PC-3 (cell line): ENCODE measurements at regions of chr3 and their contacts with region 1.

Region 1: DNA sequence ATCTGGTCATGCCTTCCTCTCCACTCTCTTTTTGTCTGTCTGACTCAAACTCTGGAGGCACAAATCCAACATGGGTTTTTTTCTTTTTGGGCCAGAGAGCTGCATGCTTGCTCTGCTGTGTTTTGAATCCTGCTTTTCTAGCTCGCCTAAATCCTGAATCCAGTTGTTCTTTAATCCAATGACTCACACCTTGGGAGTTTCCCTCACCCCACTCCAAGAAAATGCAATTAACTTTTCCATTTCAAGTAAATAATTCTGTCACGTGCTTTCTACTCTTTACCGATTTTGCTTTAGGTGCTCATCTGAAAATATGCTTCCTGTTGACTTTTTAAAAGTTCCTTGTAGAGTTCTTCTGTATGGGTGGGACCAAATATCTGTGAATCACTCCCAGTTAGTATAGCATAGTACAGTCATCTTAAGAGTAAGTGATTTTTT is 47.6 kb downstream of the SLMAP start:
- DNase-seq: peak; percentile 97
- ATAC-seq: peak; percentile 79
- H3K4me3 ChIP-seq: peak overlapping the region; percentile 36
- H3K27ac ChIP-seq: peak overlapping the region; percentile 90
- H3K4me1 ChIP-seq: peaks cover 51% of the 10 kb centered on the region
- H3K27me3 ChIP-seq: no peaks in the 10 kb centered on the region
- CTCF ChIP-seq: no peak

Region 2: GRCh38 chr3:57287205-57287604 is 516.5 kb before region 1 on chr3:
- CTCF ChIA-PET with region 1: no interaction called
- POLR2A ChIA-PET with region 1: interaction called, 26 read pairs
- intact Hi-C with region 1: no loop called
- DNase-seq: no peak
- ATAC-seq: peak; percentile 22; the same call in 1 of the 2 replicates
- H3K4me3 ChIP-seq: no peak overlapping the region
- H3K27ac ChIP-seq: no peak overlapping the region
- H3K4me1 ChIP-seq: no peaks in the 10 kb centered on the region
- H3K27me3 ChIP-seq: no peaks in the 10 kb centered on the region
- CTCF ChIP-seq: no peak

Region 3: GRCh38 chr3:57787867-57788623 is 15.6 kb before region 1 on chr3:
- CTCF ChIA-PET with region 1: no interaction called
- POLR2A ChIA-PET with region 1: no interaction called
- intact Hi-C with region 1: loop called (anchors 2 kb)
- DNase-seq: peak; percentile 56
- ATAC-seq: peak; percentile 37
- H3K4me3 ChIP-seq: no peak overlapping the region
- H3K27ac ChIP-seq: no peak overlapping the region
- H3K4me1 ChIP-seq: peaks cover 26% of the 10 kb centered on the region
- H3K27me3 ChIP-seq: no peaks in the 10 kb centered on the region
- CTCF ChIP-seq: no peak

Region 4: DNA sequence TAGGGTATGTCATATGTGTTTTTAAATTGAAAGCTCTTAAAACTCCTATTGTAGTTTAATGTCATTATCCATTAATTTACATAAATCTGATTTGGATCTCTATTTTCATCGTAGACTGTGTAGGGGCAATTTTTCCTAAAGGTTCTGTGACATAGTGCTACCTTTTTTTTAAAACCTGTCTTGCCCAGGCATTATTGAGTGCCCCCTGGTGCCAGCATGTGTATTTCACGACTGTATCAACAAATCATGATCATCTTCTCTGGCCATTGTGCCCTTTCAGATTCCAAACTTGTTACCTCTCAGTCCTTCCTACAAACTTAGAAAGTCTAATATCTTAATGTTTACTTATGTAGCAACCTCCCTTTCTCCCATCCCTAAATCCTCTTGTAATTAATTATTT is 107.3 kb after region 1 on chr3:
- CTCF ChIA-PET with region 1: no interaction called
- POLR2A ChIA-PET with region 1: no interaction called
- intact Hi-C with region 1: no loop called
- DNase-seq: peak; percentile 53
- ATAC-seq: peak; percentile 82
- H3K4me3 ChIP-seq: no peak overlapping the region
- H3K27ac ChIP-seq: no peak overlapping the region
- H3K4me1 ChIP-seq: peaks cover 13% of the 10 kb centered on the region
- H3K27me3 ChIP-seq: no peaks in the 10 kb centered on the region
- CTCF ChIP-seq: peak; percentile 83

Region 5: DNA sequence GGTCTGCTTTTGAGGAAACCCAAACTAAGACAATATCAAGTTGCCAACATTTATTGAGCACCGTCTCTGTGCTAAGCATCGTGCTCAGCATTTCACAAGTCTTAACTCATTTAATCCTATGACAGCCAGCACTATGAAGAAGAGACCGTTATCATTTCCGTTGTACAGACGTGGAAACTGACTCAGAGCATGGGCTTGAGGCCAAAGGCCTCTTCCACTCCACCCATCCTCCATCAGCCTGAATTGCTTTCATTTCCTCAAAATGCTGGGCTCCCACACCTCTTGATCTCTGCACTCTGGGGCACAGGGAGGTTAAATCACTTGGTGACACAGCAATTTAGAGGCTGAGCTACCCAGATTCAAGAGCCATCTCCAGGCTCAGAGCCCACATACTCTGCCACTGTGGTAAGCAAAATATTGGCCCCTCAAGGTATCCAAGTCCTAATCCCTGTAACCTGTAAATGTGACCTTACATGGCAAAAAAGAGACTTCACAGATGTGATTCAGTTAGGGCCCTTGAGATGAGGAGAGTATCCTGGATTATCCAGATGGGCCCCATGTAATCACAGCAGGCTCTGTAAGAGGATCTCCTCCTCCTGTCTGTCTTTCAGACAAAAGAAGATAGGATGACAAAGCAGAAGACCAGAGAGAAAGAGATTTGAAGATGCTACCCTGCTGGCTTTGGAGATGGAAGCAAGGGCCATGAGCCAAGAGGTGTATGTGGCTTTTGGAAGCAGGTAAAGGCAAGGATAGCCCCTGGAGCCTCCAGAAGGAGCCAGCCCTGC is 180.3 kb after region 1 on chr3:
- CTCF ChIA-PET with region 1: no interaction called
- POLR2A ChIA-PET with region 1: no interaction called
- intact Hi-C with region 1: no loop called
- DNase-seq: peak; percentile 87
- ATAC-seq: peak; percentile 78
- H3K4me3 ChIP-seq: no peak overlapping the region
- H3K27ac ChIP-seq: peak overlapping the region; percentile 73
- H3K4me1 ChIP-seq: peaks cover 43% of the 10 kb centered on the region
- H3K27me3 ChIP-seq: no peaks in the 10 kb centered on the region
- CTCF ChIP-seq: no peak